ENCODE measurements at regions of chr1 and their contacts with region 1.

Region 1: DNA sequence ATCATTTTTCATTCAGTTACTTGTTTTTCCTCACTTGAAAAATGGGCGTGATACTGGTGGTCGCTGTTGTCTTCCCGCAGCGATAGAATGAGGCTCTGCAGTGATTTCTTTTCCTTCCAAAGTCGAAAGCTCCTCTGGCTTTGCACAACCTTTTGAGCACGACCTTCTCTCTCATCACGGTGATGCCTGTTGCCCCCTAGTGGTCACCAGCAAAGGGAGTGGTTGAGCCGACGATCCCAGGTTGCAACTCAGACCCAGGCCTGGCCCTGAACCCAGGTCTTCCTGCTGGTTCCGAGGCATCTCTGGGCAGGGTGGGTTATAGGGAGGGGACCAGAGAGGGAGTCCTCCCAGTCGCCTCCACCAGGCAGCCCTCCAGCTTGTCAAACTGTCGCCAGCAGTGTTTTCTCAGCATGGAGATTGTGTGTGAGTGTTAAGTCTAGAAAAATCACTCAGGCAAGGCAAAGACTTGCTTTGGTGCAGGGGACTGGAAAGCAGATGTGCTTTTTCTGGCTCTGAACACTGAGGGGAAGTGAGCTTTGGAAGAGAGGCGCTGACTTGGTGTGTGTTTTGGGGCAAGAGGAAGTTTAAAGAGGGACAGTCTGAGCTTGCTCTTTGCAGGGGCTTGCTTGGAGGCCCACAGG is 285.3 kb downstream of the CAMTA1 start:
- DNase-seq: peak; percentile 52
- ATAC-seq: peak; percentile 91

Region 2: DNA sequence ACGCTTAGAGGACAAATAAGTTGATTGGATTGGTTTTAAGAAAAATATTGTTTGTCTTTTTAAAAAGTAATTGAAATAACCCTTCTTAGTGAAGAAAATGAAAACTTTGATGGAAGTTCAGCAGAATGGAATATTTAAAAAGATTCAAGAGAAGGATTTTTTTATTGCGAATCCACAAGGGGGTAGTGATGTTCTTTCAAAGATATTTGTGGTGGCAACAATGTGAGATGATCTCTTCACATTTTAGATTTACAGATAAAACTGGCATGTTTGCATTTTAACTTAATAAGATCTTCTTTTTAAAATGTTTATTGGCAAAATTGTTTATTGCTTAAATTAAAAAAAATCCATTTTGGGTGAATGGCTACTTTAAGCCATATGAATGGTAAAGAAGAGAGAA is 276.3 kb before region 1 on chr1:
- intact Hi-C with region 1: loop called (anchors 5 kb)
- DNase-seq: no peak
- ATAC-seq: no peak

Region 3: GRCh38 chr1:6998267-6998666 is 72.2 kb before region 1 on chr1:
- intact Hi-C with region 1: loop called (anchors 5 kb)
- DNase-seq: no peak
- ATAC-seq: peak; percentile 93

Region 4: DNA sequence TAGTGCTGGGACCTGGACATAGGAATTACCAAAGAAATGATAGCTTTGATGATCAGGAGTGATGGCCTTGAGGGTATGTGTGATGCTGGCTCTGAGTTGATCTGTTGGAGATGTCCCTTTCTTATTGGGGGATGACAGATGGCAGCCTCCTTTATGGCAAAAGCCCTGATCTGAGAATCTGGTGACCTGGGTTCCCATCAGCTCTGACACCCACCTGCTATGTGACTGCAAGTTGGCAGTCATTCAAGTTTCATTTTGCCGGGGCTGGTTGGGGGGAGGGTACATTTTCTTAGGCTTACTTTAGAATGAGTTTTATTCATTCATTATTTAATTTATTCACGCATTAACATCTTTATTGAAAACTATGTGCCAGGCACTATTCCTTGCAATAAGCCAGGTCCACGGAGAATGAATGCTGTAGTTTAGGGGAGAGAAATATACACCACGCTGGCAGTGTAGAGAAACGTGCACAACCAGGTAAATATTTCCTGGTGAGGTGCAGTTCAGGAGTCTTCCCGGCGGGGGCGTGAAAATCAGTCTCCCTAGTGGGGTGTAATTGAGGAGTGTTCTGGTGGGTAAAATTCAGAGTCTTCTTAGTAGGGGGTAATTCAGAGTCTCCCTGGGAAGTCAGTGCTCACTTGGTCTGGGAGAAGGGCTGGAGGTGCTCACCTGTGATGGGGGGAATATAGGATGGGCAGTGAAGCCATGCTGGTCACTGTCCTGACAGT is 116.0 kb after region 1 on chr1:
- intact Hi-C with region 1: no loop called
- DNase-seq: no peak
- ATAC-seq: no peak

Region 5: DNA sequence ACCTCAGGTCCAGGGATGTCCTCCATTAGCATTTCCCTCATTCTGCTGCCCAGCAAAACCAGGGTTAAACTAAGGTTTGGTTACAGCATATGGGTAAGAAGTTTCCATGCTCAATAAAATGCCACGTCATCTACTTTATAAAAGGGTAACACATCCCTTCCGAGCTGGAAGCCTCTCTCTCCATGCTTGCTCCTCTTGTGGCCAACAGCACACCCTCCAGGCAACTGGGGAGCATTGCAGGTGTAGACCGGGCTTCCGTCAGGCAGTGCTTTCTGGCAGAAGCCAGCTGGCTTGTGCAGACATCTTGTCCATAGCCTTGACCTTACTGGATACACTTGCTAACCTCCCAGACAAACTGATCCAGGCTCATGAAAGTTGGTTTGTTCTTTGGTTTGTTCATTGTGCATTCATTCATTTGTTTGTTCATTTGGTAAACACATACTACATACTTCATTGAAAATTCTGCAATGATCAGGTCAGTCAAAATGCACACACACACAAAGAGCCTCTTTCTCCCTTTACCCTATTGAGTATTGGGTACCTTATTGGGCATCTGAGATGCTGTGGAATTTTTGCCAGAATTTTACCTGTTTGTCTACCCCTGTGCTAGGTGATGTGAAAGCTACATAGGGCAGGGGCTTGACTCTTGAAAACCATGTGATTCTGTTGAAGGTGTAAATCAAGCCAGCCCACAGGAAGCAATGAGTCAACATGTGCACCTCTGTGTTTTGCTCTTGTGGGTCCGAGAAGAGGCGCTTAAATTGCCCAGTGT is 137.6 kb after region 1 on chr1:
- intact Hi-C with region 1: loop called (anchors 10 kb)
- DNase-seq: no peak
- ATAC-seq: peak; percentile 79

Region 6: GRCh38 chr1:7281821-7282220 is 211.3 kb after region 1 on chr1:
- intact Hi-C with region 1: no loop called
- DNase-seq: no peak
- ATAC-seq: no peak